CD8-positive, alpha-beta T cell (primary cell): ENCODE measurements at regions of chr21 and their contacts with region 1.

Region 1: DNA sequence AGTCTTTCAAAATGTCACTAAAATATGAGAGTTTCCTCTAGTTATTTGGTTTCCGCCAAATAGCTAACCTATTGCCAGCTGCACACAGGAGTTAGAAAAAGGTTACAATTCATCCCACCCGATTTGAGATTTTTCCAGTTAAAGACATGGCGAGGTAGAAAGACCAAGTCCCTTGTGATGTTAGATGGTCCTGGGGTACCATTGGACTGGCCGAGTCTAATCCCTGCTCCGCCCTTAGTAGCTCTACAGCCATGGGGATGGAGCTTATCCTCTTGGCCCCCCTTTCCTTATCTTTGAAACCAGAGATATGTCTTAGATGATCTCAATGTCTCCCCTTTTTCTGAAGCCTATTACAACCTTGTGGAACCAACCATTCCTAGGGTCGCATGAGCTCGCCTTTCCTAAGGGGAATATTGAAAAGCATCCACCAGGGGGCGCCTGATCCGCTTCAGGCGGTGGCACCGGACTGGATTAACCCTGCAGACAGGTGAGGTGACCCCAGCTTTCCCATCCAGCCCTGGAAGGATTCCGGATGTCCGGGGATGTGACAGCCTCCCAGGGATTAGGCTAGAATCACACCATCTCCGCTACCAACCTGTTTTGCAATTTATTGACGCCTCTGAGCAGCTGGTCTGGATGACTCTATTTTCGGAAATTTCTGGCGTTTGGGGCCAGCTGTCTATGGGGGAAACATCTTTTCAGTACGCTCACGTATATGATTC is 68.3 kb upstream of the SIM2 start:
- DNase-seq: peak; percentile 8 to 74 (median 56)
- ATAC-seq: no peak
- H3K4me3 ChIP-seq: no peak overlapping the region
- H3K4me3 Mint-ChIP-seq: no peak overlapping the region
- H3K27ac ChIP-seq: no peak overlapping the region
- H3K27ac Mint-ChIP-seq: no peak overlapping the region
- H3K4me1 ChIP-seq: no peaks in the 10 kb centered on the region
- H3K4me1 Mint-ChIP-seq: no peaks in the 10 kb centered on the region
- H3K27me3 ChIP-seq: peaks cover 0 to 3% of the 10 kb centered on the region in 2 experiments
- H3K27me3 Mint-ChIP-seq: peaks cover 7% of the 10 kb centered on the region
- CTCF ChIP-seq: peak; percentile 54

Region 2: GRCh38 chr21:36478207-36478701 is 152.4 kb before region 1 on chr21:
- CTCF ChIA-PET with region 1: no interaction called
- POLR2A ChIA-PET with region 1: no interaction called
- intact Hi-C with region 1: no loop called
- DNase-seq: no peak
- ATAC-seq: no peak
- H3K4me3 ChIP-seq: no peak overlapping the region
- H3K4me3 Mint-ChIP-seq: no peak overlapping the region
- H3K27ac ChIP-seq: no peak overlapping the region
- H3K27ac Mint-ChIP-seq: no peak overlapping the region
- H3K4me1 ChIP-seq: no peaks in the 10 kb centered on the region
- H3K4me1 Mint-ChIP-seq: no peaks in the 10 kb centered on the region
- H3K27me3 ChIP-seq: no peaks in the 10 kb centered on the region
- H3K27me3 Mint-ChIP-seq: peaks cover 6% of the 10 kb centered on the region
- CTCF ChIP-seq: no peak

Region 3: GRCh38 chr21:36589355-36589971 is 41.2 kb before region 1 on chr21:
- CTCF ChIA-PET with region 1: interaction called, 19 read pairs
- POLR2A ChIA-PET with region 1: no interaction called
- intact Hi-C with region 1: loop called (anchors 5 to 10 kb)
- DNase-seq: peak in 4 of 9 experiments; percentile 7 to 27 (median 12)
- ATAC-seq: no peak
- H3K4me3 ChIP-seq: no peak overlapping the region
- H3K4me3 Mint-ChIP-seq: no peak overlapping the region
- H3K27ac ChIP-seq: no peak overlapping the region
- H3K27ac Mint-ChIP-seq: no peak overlapping the region
- H3K4me1 ChIP-seq: no peaks in the 10 kb centered on the region
- H3K4me1 Mint-ChIP-seq: peaks cover 7% of the 10 kb centered on the region
- H3K27me3 ChIP-seq: no peaks in the 10 kb centered on the region
- H3K27me3 Mint-ChIP-seq: no peaks in the 10 kb centered on the region
- CTCF ChIP-seq: no peak

Region 4: DNA sequence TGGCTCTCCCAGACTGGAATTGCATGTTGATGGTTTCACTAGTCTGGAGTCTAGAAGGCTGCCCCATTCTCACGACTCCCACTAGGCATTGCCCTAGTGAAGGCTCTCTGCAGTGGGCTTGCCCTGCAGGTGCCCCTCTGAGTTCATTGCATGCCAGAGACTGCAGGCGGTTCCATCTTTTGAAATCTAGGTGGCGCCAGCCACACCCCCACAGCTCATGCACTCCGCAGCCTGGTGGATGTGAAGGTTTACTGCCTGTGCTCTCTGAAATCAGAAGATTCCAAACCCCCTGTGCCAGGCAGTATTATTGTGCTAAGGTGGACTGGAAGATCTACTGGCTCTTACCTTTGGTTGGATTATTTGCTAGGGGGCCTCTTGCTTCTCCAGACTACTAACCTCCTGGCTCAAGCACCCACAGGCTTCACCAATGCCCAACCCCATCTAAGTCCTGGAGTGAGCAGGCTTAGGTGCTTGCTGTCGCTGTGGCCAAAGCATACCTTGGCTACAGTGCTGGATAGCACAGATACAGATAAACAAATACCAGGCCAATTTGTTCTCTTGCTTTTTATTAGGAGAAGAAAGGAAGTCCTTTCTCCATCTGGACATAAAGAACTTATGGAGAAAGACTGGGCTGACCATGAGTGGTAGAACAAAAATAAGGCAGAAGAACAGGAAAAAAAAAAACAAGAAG is 15.2 kb before region 1 on chr21:
- CTCF ChIA-PET with region 1: interaction called, 13 read pairs
- POLR2A ChIA-PET with region 1: no interaction called
- intact Hi-C with region 1: no loop called
- DNase-seq: no peak
- ATAC-seq: no peak
- H3K4me3 ChIP-seq: no peak overlapping the region
- H3K4me3 Mint-ChIP-seq: no peak overlapping the region
- H3K27ac ChIP-seq: no peak overlapping the region
- H3K27ac Mint-ChIP-seq: no peak overlapping the region
- H3K4me1 ChIP-seq: no peaks in the 10 kb centered on the region
- H3K4me1 Mint-ChIP-seq: no peaks in the 10 kb centered on the region
- H3K27me3 ChIP-seq: no peaks in the 10 kb centered on the region
- H3K27me3 Mint-ChIP-seq: peaks cover 11% of the 10 kb centered on the region
- CTCF ChIP-seq: no peak

Region 5: GRCh38 chr21:36643374-36644250 is 13.0 kb after region 1 on chr21:
- CTCF ChIA-PET with region 1: interaction called, 14 read pairs
- POLR2A ChIA-PET with region 1: no interaction called
- intact Hi-C with region 1: no loop called
- DNase-seq: no peak
- ATAC-seq: no peak
- H3K4me3 ChIP-seq: no peak overlapping the region
- H3K4me3 Mint-ChIP-seq: no peak overlapping the region
- H3K27ac ChIP-seq: no peak overlapping the region
- H3K27ac Mint-ChIP-seq: no peak overlapping the region
- H3K4me1 ChIP-seq: no peaks in the 10 kb centered on the region
- H3K4me1 Mint-ChIP-seq: peaks cover 8% of the 10 kb centered on the region
- H3K27me3 ChIP-seq: no peaks in the 10 kb centered on the region
- H3K27me3 Mint-ChIP-seq: peaks cover 16% of the 10 kb centered on the region
- CTCF ChIP-seq: no peak

Region 6: DNA sequence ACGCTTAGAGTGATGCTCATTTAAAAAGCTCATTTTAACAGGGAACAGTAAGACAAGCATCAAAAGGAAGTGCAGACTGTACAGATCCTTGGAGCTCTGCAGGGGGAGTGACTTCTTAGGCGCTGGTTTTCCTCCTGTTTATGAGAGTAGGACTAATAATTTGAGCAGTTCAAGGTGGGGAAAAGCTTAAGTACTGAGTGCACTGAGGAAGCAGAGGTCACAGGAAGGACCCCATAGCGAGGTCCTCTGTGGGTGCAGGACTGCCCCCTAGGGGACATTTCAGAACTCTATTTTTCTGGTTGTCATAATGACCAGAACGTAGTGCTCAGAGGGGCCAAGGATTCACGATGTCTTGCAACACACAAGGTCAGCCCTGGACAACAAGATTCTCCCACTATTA is 223.7 kb after region 1 on chr21:
- CTCF ChIA-PET with region 1: interaction called, 3 read pairs
- POLR2A ChIA-PET with region 1: no interaction called
- intact Hi-C with region 1: loop called in 1 of 2 experiments (anchors 5 kb)
- DNase-seq: peak in 3 of 9 experiments; percentile 14 to 50 (median 38)
- ATAC-seq: no peak
- H3K4me3 ChIP-seq: no peak overlapping the region
- H3K4me3 Mint-ChIP-seq: no peak overlapping the region
- H3K27ac ChIP-seq: no peak overlapping the region
- H3K27ac Mint-ChIP-seq: no peak overlapping the region
- H3K4me1 ChIP-seq: no peaks in the 10 kb centered on the region
- H3K4me1 Mint-ChIP-seq: peaks cover 2% of the 10 kb centered on the region
- H3K27me3 ChIP-seq: no peaks in the 10 kb centered on the region
- H3K27me3 Mint-ChIP-seq: no peaks in the 10 kb centered on the region
- CTCF ChIP-seq: peak; percentile 46

Region 7: DNA sequence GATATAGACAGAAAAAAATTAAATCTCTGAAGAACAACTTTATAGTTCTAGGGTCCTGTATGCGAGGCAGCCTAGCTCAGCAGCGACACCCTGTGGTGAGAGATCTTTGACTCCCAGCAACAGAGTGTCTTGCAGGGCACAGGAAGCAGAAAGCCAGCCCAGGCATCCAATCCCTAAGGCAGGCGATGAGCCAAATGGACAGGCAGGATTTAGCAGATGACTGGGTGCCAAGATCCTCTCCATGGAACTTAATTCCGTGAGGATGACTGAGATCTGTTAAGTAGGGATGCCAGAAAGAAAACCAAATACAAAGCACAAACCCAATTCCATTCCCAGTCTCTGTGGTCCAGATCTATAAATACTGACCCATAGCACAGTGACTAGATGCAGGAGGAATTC is 297.1 kb after region 1 on chr21:
- CTCF ChIA-PET with region 1: interaction called, 9 read pairs
- POLR2A ChIA-PET with region 1: no interaction called
- intact Hi-C with region 1: loop called in 1 of 2 experiments (anchors 1 kb)
- DNase-seq: peak; percentile 43 to 79 (median 71)
- ATAC-seq: peak; percentile 52
- H3K4me3 ChIP-seq: no peak overlapping the region
- H3K4me3 Mint-ChIP-seq: no peak overlapping the region
- H3K27ac ChIP-seq: no peak overlapping the region
- H3K27ac Mint-ChIP-seq: no peak overlapping the region
- H3K4me1 ChIP-seq: peaks cover 13% of the 10 kb centered on the region
- H3K4me1 Mint-ChIP-seq: peaks cover 10% of the 10 kb centered on the region
- H3K27me3 ChIP-seq: no peaks in the 10 kb centered on the region
- H3K27me3 Mint-ChIP-seq: no peaks in the 10 kb centered on the region
- CTCF ChIP-seq: peak; percentile 83

Region 8: DNA sequence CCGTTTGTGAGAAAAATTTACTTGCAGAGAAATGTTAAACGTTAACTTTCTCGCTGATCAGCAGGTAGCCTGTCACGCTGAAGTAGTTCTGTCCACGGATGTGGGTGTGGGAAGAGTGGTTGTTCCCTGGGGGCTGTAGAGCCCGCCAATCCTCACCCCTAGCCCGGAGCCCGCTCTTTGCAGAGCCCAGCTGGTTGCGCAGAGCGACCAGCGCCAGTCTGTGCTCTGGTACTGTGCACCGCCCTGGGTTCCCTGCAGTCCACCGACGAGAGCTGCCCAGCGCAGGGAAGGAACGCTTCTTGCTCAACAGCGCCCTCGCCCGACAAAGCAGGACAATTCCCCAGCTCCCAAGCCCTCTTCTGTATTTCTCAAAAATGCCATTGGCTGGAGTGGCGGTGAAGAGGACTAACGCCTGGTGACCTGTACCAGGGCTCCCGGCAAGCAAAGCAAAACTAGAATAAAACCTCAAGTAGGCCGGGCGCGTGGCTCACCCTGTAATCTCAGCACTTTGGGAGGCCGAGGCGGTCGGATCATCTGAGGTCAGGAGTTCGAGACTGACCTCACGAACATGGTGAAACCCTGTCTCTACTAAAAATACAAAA is 379.2 kb after region 1 on chr21:
- CTCF ChIA-PET with region 1: interaction called, 7 read pairs
- POLR2A ChIA-PET with region 1: no interaction called
- intact Hi-C with region 1: loop called in 1 of 2 experiments (anchors 10 kb)
- DNase-seq: peak; percentile 60 to 85 (median 80)
- ATAC-seq: peak; percentile 91
- H3K4me3 ChIP-seq: peak overlapping the region; percentile 7 to 37
- H3K4me3 Mint-ChIP-seq: peak overlapping the region; percentile 58
- H3K27ac ChIP-seq: no peak overlapping the region
- H3K27ac Mint-ChIP-seq: no peak overlapping the region
- H3K4me1 ChIP-seq: peaks cover 24% of the 10 kb centered on the region
- H3K4me1 Mint-ChIP-seq: peaks cover 16% of the 10 kb centered on the region
- H3K27me3 ChIP-seq: peaks cover 4 to 20% of the 10 kb centered on the region in 2 experiments
- H3K27me3 Mint-ChIP-seq: peaks cover 42% of the 10 kb centered on the region
- CTCF ChIP-seq: peak; percentile 85